ENCODE measurements at regions of chr16 and their contacts with region 1.

Region 1: GRCh38 chr16:11977376-11978041 is 975 bp downstream of the SNX29 start:
- DNase-seq: no peak
- ATAC-seq: no peak
- H3K4me3 Mint-ChIP-seq: peak overlapping the region; percentile 88
- H3K27ac Mint-ChIP-seq: peak overlapping the region; percentile 30
- H3K4me1 Mint-ChIP-seq: peaks cover 39% of the 10 kb centered on the region
- H3K27me3 Mint-ChIP-seq: no peaks in the 10 kb centered on the region

Region 2: DNA sequence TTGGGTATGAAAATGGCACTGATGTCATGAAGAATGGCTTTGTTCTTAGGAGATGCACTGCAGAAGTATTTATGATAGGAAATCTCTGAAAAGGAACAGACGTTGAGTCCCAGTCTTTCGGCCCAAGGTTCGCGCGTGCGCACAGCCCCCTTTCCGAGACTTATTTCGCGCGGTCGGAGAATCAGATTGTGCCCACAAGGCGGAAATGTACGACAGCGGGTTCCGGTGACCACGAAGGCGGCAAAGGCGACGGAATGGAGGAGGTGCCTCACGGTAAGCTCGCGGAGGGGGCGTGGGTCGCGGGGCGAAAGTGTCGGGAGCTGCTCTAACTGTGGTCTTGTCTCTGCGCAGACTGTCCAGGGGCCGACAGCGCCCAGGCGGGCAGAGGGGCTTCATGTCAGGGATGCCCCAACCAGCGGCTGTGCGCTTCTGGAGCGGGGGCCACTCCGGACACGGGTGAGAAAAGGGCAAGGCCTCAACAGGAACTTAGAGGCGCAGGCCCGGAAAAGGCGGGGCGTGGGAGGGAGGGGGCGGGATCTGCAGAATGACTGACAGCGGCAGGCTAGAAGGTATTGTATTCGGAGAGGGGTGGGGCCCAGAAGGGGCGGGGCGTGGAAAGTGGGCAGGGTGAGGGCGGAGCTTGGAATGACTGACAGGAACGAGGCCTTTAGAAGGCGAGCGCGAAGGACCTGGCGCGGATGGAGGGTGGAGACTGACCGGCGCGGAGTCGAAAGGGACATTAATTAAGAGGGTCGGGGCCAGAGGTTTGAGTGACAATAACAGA is 1233.7 kb before region 1 on chr16 and contains the start of gene NUBP1:
- CTCF ChIA-PET with region 1: no interaction called
- POLR2A ChIA-PET with region 1: no interaction called
- intact Hi-C with region 1: loop called in 1 of 2 experiments (anchors 1 kb)
- DNase-seq: peak; percentile 100
- ATAC-seq: peak; percentile 95
- H3K4me3 Mint-ChIP-seq: peak within 1 kb of the TSS; percentile 75
- H3K27ac Mint-ChIP-seq: peak within 1 kb of the TSS; percentile 98
- H3K4me1 Mint-ChIP-seq: peaks cover 30% of the 10 kb centered on the region
- H3K27me3 Mint-ChIP-seq: no peaks in the 10 kb centered on the region
- total RNA-seq, gene NUBP1: 25.9 to 33.1 TPM

Region 3: GRCh38 chr16:11621920-11622651 is 355.4 kb before region 1 on chr16:
- CTCF ChIA-PET with region 1: no interaction called
- POLR2A ChIA-PET with region 1: no interaction called
- intact Hi-C with region 1: no loop called
- DNase-seq: peak; percentile 53
- ATAC-seq: peak; percentile 68
- H3K4me3 Mint-ChIP-seq: peak overlapping the region; percentile 63
- H3K27ac Mint-ChIP-seq: peak overlapping the region; percentile 84
- H3K4me1 Mint-ChIP-seq: peaks cover 55% of the 10 kb centered on the region
- H3K27me3 Mint-ChIP-seq: no peaks in the 10 kb centered on the region

Region 4: DNA sequence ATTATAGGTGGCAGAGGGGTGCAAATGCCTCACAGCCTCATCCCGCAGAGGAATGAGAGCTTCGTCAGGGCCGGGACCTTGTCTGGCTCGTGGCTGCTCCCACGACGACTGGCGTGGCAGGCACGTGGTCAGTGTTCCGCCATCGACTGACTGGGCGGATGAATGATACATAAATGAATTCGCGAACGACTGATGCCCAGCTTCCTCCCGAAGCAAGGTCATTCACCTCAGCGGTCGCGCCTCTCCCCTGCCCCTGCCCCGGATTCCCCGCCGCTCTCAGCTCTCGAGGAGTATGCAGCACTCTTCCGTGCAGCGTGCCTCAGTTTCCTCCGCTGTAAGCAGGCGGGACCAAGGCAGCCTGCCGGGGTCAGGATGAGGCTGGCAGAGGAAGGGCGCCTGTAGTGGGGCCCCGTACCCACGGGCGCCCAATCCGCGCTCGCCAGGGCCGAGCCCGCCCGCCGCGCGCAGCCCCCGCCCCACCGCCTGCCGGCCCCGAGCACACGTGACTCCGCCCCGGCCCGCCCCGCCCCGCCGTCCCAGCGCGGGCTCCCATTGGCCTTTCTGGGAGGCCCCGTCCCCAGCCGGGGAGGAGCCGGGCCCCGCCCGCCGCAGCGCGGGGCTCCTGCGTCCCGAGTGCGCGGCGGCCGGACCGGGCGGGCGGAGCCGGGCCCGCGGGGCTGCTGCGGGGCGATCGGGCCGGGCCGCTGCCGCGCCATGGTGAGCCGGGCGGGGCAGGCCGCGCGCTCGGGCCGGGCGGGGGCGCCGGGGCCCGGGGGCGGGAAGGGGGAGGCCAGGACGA is 309.5 kb before region 1 on chr16 and contains the start of gene SNN:
- CTCF ChIA-PET with region 1: no interaction called
- POLR2A ChIA-PET with region 1: no interaction called
- intact Hi-C with region 1: loop called in 1 of 2 experiments (anchors 2 kb)
- DNase-seq: peak; percentile 93
- ATAC-seq: peak; percentile 90
- H3K4me3 Mint-ChIP-seq: peak within 1 kb of the TSS; percentile 72
- H3K27ac Mint-ChIP-seq: no peak within 1 kb of the TSS
- H3K4me1 Mint-ChIP-seq: peaks cover 73% of the 10 kb centered on the region
- H3K27me3 Mint-ChIP-seq: no peaks in the 10 kb centered on the region
- total RNA-seq, gene SNN: 6.0 to 7.2 TPM

Region 5: DNA sequence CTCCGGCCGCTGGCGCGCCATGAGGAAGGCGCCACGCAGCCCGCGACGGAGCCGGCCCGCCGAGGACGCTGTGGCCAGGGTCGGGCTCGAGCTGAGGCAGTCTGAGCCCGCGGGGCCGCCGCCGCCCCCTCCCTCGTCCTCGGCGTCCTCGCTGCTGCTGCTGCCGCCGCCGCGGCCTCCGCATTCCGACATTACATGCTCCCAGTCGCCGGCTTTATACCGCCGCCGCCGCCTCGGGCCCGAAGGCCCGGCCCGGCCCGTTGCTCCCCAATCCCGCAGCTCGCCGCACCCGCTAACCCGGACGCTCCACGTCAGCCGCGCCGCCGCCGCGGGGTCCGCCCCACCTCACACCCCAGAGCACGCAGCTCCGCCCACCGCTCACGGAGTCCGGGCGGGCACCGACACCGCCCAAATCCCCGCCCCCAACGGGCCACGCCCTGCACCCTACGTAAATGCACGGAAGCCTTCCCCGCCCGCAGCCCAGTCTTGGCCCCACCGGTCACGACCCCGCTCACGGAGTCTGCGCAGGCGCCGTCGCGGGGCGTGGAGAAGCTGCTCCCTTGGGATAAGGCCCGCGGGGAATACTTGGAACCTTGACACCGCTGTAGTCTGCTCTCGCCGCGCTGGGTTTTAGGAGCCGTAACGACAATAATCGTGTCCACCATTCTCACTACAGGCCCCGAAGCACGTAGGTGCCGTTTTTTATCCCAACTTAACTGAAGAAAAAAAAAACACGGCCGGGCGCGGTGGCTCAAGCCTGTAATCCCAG is 234.8 kb before region 1 on chr16 and contains the start of gene TXNDC11:
- CTCF ChIA-PET with region 1: no interaction called
- POLR2A ChIA-PET with region 1: no interaction called
- intact Hi-C with region 1: loop called in 1 of 2 experiments (anchors 2 kb)
- DNase-seq: peak; percentile 100
- ATAC-seq: peak; percentile 92
- H3K4me3 Mint-ChIP-seq: peak within 1 kb of the TSS; percentile 88
- H3K27ac Mint-ChIP-seq: peak within 1 kb of the TSS; percentile 96
- H3K4me1 Mint-ChIP-seq: peaks cover 50% of the 10 kb centered on the region
- H3K27me3 Mint-ChIP-seq: no peaks in the 10 kb centered on the region
- total RNA-seq, gene TXNDC11: 27.3 to 28.3 TPM

Region 6: GRCh38 chr16:11851294-11852091 is 126.0 kb before region 1 on chr16 and contains the start of gene RSL1D1:
- CTCF ChIA-PET with region 1: no interaction called
- POLR2A ChIA-PET with region 1: no interaction called
- intact Hi-C with region 1: loop called in 1 of 2 experiments (anchors 1 kb)
- DNase-seq: peak; percentile 96
- ATAC-seq: peak; percentile 85
- H3K4me3 Mint-ChIP-seq: peak within 1 kb of the TSS; percentile 99
- H3K27ac Mint-ChIP-seq: peak within 1 kb of the TSS; percentile 96
- H3K4me1 Mint-ChIP-seq: peaks cover 52% of the 10 kb centered on the region
- H3K27me3 Mint-ChIP-seq: no peaks in the 10 kb centered on the region
- total RNA-seq, gene RSL1D1: 369 to 466 TPM

Region 7: GRCh38 chr16:12067714-12068401 is 90.3 kb after region 1 on chr16:
- CTCF ChIA-PET with region 1: interaction called, 5 read pairs
- POLR2A ChIA-PET with region 1: no interaction called
- intact Hi-C with region 1: loop called (anchors 5 kb)
- DNase-seq: peak; percentile 67
- ATAC-seq: peak; percentile 83
- H3K4me3 Mint-ChIP-seq: no peak overlapping the region
- H3K27ac Mint-ChIP-seq: no peak overlapping the region
- H3K4me1 Mint-ChIP-seq: no peaks in the 10 kb centered on the region
- H3K27me3 Mint-ChIP-seq: no peaks in the 10 kb centered on the region

Region 8: GRCh38 chr16:12803203-12804097 is 825.9 kb after region 1 on chr16 and contains the start of gene CPPED1:
- CTCF ChIA-PET with region 1: no interaction called
- POLR2A ChIA-PET with region 1: no interaction called
- intact Hi-C with region 1: loop called in 1 of 2 experiments (anchors 5 kb)
- DNase-seq: peak; percentile 95
- ATAC-seq: peak; percentile 93
- H3K4me3 Mint-ChIP-seq: peak within 1 kb of the TSS; percentile 97
- H3K27ac Mint-ChIP-seq: peak within 1 kb of the TSS; percentile 92
- H3K4me1 Mint-ChIP-seq: peaks cover 28% of the 10 kb centered on the region
- H3K27me3 Mint-ChIP-seq: no peaks in the 10 kb centered on the region
- total RNA-seq, gene CPPED1: 8.0 to 9.8 TPM

Measured in activated CD4-positive, alpha-beta T cell treated with anti-CD3 and anti-CD28 coated beads for 36 hours (primary cell).